ENCODE measurements at regions of chr16 and their contacts with region 1.

Region 1: GRCh38 chr16:25224731-25225319 is 8.1 kb downstream of the AQP8 start:
- DNase-seq: no peak

Region 2: DNA sequence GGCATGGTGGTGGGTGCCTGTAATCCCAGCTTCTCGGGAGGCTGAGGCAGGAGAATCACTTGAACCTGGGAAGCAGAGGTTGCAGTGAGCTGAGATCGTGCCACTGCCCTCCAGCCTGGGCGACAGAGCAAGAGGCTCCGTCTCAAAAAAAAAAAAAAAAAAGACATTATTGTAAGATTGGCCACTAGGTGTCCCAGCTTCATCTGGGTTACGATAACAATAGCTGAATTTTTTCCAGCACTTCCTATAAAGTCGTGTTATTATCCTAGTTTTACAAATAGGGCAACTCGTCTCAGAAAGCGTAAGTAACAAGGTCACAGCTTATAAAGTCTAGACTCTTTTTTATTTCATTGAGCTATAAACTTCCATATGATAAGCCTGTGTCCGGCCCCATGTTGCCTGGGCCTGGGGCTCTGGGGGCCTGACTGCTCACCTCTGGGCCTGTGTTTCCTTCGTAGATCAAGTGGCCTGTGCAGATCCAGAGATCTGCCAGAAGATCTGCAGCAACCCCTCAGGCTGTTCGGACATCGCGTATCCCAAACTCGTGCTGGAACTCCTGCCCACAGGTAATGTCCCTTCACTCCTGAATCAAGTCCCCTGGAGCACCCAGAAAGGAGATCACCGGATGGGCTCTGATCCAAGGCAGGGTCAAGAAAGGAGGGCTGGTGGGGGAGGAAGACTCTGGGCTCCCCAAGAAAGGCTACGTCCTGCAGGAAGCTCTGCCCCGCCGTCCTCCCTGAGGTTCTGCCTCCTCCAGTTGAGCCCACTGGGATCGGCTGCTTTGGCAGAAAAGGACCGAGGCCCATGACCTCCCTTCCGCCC is 318.4 kb before region 1 on chr16:
- intact Hi-C with region 1: loop called (anchors 10 kb)
- DNase-seq: peak; percentile 9

Region 3: GRCh38 chr16:25051406-25052150 is 173.2 kb before region 1 on chr16:
- intact Hi-C with region 1: loop called (anchors 5 kb)
- DNase-seq: no peak

Region 4: GRCh38 chr16:25126820-25127232 is 98.0 kb before region 1 on chr16:
- intact Hi-C with region 1: loop called (anchors 10 kb)
- DNase-seq: no peak

Region 5: DNA sequence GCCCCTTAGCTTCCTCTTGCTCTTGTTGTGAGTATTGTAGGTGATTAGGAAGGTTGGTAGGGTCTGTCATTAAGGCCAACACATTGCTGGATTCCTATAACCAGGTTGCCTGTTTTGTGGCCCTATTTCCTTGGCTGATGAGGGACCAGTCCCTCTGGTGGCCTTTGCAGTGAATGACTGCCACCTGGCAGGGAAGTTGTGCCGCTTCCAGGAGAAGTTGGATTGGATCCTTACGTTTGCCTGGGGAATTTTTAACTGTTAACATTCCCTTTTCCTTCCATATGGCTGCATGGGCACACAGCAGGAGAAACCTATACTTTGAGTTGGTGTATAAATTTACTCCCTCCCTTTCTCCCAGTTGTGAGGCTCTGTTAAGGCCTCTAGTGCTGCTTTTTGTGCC is 80.9 kb before region 1 on chr16:
- intact Hi-C with region 1: no loop called
- DNase-seq: no peak

Region 6: GRCh38 chr16:25172821-25173220 is 52.0 kb before region 1 on chr16:
- intact Hi-C with region 1: no loop called
- DNase-seq: no peak